ENCODE measurements at regions of chr4 and their contacts with region 1.

Region 1: DNA sequence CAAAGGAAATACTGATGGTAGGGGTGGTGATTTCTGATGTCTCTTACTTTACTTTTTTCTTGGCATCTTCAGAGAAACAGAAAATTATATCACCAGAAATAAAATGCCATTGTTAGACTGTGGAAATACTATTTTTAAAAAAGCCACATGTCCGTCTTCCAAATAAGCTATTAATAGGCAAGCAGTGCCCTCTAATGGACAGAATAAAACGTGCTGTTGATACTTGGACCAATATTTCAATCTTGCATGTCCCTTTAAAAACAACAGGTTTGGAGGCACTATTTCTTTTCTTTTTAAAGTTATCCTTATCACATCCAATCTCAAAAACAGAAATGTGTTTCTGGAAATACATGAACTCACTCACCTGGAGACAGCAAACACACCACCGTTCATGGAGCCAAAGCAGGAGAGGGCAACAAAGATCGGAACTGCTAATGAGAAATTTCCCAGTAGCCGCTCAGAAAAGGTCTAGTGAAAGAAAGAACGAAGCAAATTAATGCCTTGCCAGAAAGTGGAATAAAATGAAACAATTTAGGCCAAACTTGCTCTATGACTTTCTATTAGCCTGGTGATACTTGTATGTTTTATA is 59.2 kb downstream of the SLC7A11 start:
- DNase-seq: no peak
- ATAC-seq: peak; percentile 28
- H3K4me3 Mint-ChIP-seq: no peak overlapping the region
- H3K27ac Mint-ChIP-seq: no peak overlapping the region
- H3K4me1 Mint-ChIP-seq: no peaks in the 10 kb centered on the region
- H3K27me3 Mint-ChIP-seq: peaks cover 3% of the 10 kb centered on the region
- CTCF ChIP-seq: no peak

Region 2: DNA sequence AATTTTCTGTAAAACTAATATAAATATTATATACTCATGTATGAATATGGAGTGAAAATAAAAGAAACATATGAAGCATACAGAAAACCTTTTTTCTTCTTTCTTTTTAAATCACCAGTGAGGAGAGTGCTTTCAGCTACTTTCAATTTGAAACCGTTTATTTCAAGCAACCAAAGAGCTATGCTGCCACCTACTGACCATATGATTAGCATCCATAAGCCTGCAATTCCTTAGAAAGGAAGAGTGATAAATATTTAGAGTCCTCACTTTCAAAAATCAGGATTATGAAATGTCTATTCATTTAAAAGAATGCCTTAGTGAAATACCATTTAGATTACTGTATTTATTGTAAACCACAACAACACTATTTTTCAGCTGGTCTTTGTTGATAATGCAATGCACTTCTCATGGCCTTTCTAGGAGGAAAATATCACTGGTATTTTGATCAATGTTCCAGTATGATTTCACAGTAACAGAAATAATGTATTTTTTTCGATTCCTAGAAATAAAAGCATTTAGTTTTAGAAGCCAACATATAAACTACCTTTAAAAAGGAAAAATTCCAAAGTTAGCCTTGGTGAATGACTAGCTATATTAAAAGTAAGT is 1318.2 kb before region 1 on chr4:
- CTCF ChIA-PET with region 1: no interaction called
- POLR2A ChIA-PET with region 1: no interaction called
- intact Hi-C with region 1: loop called (anchors 5 kb)
- DNase-seq: no peak
- ATAC-seq: no peak
- H3K4me3 Mint-ChIP-seq: no peak overlapping the region
- H3K27ac Mint-ChIP-seq: no peak overlapping the region
- H3K4me1 Mint-ChIP-seq: no peaks in the 10 kb centered on the region
- H3K27me3 Mint-ChIP-seq: no peaks in the 10 kb centered on the region
- CTCF ChIP-seq: no peak